ENCODE measurements at regions of chr1 and their contacts with region 1.

Region 1: GRCh38 chr1:11907275-11908094 is 18.7 kb downstream of the KIAA2013 start:
- DNase-seq: peak; percentile 98
- H3K4me3 Mint-ChIP-seq: peak overlapping the region; percentile 88
- H3K27ac Mint-ChIP-seq: peak overlapping the region; percentile 100
- H3K4me1 Mint-ChIP-seq: peaks cover 38% of the 10 kb centered on the region
- H3K27me3 Mint-ChIP-seq: peaks cover 29% of the 10 kb centered on the region

Region 2: DNA sequence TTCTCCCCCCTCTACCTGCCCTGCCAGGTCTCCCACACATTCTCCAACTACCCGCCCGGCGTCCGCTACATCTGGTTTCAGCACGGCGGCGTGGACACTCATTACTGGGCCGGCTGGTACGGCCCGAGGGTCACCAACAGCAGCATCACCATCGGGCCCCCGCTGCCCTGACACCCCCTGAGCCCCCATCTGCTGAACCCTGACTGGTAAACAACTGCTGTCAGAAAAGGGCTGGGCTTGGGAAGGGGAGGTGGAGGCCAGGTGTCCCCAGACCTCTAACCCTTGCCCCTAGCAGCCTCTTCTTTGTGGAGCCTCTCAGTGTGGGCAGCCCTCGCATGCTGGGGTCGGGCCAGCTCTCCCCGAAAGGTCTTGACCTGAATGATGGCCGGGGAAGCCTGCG is 246.4 kb before region 1 on chr1:
- intact Hi-C with region 1: no loop called
- DNase-seq: no peak
- H3K4me3 Mint-ChIP-seq: no peak overlapping the region
- H3K27ac Mint-ChIP-seq: no peak overlapping the region
- H3K4me1 Mint-ChIP-seq: peaks cover 7% of the 10 kb centered on the region
- H3K27me3 Mint-ChIP-seq: no peaks in the 10 kb centered on the region

Region 3: GRCh38 chr1:11681071-11681771 is 226.3 kb before region 1 on chr1 and contains the start of gene MAD2L2:
- intact Hi-C with region 1: loop called (anchors 1 kb)
- DNase-seq: peak; percentile 98
- H3K4me3 Mint-ChIP-seq: peak within 1 kb of the TSS; percentile 92
- H3K27ac Mint-ChIP-seq: peak within 1 kb of the TSS; percentile 93
- H3K4me1 Mint-ChIP-seq: peaks cover 16% of the 10 kb centered on the region
- H3K27me3 Mint-ChIP-seq: peaks cover 10% of the 10 kb centered on the region
- total RNA-seq, gene MAD2L2: 80.1 and 81.5 TPM in 2 replicates

Region 4: GRCh38 chr1:11805447-11806306 is 101.8 kb before region 1 on chr1 and contains the starts of genes CLCN6 and MTHFR:
- intact Hi-C with region 1: loop called (anchors 1 kb)
- DNase-seq: peak; percentile 100
- H3K4me3 Mint-ChIP-seq: peak within 1 kb of the TSS; percentile 99
- H3K27ac Mint-ChIP-seq: peak within 1 kb of the TSS; percentile 95
- H3K4me1 Mint-ChIP-seq: peaks cover 53% of the 10 kb centered on the region
- H3K27me3 Mint-ChIP-seq: no peaks in the 10 kb centered on the region
- total RNA-seq, gene CLCN6: 12.7 and 15.2 TPM in 2 replicates
- total RNA-seq, gene MTHFR: 15.6 and 18.4 TPM in 2 replicates

Region 5: DNA sequence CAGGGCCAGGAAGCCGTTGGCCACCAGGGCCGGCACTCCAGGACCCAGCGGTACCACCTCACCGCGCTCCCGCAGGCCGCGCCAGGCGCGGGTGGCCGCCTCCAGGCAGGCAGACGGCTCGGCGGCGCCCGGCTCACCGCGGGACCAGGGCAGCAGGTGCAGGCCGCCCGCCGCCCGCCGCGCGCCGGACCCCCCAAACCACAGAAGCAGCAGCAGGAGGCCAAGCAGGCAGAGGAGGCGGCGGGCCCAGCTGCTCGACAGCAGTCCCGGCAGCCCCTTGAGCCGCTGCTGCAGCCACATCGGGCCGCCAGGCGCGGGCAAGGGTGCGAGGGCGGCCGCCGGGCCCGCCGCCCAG is 18.4 kb after region 1 on chr1:
- intact Hi-C with region 1: loop called (anchors 1 kb)
- DNase-seq: no peak
- H3K4me3 Mint-ChIP-seq: peak overlapping the region; percentile 85
- H3K27ac Mint-ChIP-seq: no peak overlapping the region
- H3K4me1 Mint-ChIP-seq: peaks cover 28% of the 10 kb centered on the region
- H3K27me3 Mint-ChIP-seq: no peaks in the 10 kb centered on the region

Region 6: DNA sequence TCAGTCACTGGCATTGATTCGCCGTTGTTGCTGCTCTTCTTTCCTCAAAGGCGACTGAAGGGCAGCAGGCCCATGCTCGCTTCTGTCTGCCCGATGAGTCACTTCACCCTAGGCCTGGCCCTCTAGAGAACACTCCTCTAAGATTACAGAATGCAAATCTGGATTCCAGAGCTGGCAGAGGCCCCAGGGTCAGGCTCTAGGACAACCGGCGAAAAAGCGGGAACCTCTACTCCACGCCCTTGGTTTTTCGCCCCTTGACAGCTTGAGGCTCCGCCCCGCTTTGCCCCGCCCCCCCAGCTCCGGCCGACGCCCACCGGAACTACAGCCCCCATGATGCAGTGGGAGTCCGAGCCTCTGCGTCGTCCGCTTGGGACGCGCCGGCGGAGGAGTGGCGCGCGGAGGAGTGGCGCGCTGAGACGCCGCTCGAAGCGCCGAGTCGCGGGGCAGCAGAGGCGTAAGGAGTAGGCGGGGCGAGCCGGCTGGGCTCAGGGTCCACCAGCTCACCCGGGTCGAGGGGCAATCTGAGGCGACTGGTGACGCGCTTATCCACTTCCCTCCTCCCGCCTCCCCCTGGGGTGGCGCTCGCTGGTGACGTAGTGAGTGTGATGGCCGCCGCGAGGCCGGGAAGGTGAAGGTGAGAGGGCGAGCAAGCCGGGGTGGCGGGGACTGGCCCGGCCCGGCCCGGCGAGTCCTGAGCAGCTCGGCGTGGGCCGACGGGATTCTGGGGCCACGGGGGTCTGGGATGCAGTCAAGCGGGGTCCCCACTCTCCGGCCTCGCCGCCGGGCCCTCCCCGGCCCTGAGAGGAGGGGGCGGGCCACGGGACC is 72.6 kb after region 1 on chr1 and contains the start of gene MFN2:
- intact Hi-C with region 1: loop called (anchors 1 kb)
- DNase-seq: peak; percentile 98
- H3K4me3 Mint-ChIP-seq: peak within 1 kb of the TSS; percentile 85
- H3K27ac Mint-ChIP-seq: peak within 1 kb of the TSS; percentile 85
- H3K4me1 Mint-ChIP-seq: peaks cover 29% of the 10 kb centered on the region
- H3K27me3 Mint-ChIP-seq: no peaks in the 10 kb centered on the region
- total RNA-seq, gene MFN2: 84.6 and 88.7 TPM in 2 replicates

Region 7: GRCh38 chr1:12067900-12068821 is 160.7 kb after region 1 on chr1:
- intact Hi-C with region 1: loop called (anchors 5 kb)
- DNase-seq: peak; percentile 81
- H3K4me3 Mint-ChIP-seq: peak overlapping the region; percentile 71
- H3K27ac Mint-ChIP-seq: peak overlapping the region; percentile 94
- H3K4me1 Mint-ChIP-seq: peaks cover 55% of the 10 kb centered on the region
- H3K27me3 Mint-ChIP-seq: peaks cover 4% of the 10 kb centered on the region

Region 8: GRCh38 chr1:12434174-12434573 is 526.7 kb after region 1 on chr1:
- intact Hi-C with region 1: loop called (anchors 5 kb)
- DNase-seq: peak; percentile 90
- H3K4me3 Mint-ChIP-seq: peak overlapping the region; percentile 23
- H3K27ac Mint-ChIP-seq: peak overlapping the region; percentile 85
- H3K4me1 Mint-ChIP-seq: peaks cover 64% of the 10 kb centered on the region
- H3K27me3 Mint-ChIP-seq: no peaks in the 10 kb centered on the region